ENCODE measurements at regions of chr22 and their contacts with region 1.

Region 1: DNA sequence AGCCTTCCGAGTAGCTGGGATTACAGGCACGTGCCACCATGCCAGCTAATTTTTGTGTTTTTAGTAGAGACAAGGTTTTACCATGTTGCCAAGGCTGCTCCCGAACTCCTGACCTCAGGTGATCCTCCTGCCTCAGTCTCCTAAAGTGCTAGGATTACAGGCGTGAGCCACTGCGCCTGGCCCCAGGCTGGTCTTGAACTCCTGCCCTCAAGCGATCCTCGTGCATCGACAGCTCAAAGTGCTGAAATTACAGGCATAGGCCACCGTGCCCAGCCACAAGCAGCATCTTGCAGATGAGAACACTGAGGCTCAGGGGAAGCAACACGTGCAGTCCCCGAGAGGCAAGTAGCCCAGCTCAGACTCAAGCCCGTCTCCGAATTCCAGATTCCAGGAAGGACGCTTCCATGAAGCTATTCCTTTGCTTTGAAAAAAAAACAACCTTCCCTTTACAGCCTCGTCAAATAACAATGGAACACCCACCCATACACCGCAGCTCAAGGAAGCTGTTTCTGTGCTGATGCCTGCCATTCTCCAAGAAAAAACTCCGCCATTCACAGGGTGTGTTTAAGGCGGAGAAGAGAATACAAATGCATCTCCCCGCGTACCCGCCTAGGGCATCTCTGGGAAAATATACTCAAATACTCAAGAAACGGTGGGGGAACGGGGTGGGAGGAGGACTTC is 34.5 kb upstream of the PDGFB start:
- DNase-seq: no peak

Region 2: DNA sequence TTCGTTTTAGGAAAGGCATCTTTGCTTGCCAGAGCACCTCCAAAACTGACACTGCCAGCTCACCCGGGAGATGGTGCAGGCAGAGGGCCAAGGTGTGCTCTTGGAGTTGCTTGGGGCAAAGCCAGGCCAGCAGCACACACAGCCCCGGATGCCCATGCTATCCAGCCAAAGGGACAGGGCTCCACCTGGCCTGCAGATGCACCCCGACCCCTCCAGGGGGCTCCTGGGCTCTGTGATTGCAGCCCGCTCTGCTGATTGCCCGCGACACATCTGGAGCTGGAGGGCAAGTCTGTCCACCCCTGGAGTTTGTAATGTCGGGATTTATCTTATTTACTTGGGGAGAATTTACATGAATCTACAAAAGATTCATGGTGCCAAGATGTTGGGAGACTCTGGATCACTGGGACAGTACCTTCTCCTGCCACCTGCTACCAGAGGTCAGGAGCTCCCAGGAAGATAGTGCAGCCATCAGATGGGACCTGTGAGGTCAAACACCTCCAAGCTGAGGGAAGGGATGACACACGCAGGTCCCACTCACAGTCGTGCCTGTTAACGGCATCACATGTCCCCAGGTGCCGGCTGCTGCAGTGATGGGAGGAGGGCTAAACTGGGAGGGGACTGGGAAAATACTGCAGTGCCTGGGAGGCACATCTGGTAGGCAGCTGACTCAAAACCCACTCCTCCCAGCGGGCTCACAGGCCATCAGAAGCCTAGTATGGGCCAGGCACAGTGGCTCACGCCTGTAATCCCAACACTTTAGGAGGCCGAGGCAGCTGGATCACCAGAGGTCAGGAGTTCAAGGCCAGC is 144.0 kb before region 1 on chr22:
- CTCF ChIA-PET with region 1: interaction called, 12 read pairs
- POLR2A ChIA-PET with region 1: no interaction called
- DNase-seq: peak; percentile 70